H1 (cell line): ENCODE measurements at regions of chr2 and their contacts with region 1.

Region 1: DNA sequence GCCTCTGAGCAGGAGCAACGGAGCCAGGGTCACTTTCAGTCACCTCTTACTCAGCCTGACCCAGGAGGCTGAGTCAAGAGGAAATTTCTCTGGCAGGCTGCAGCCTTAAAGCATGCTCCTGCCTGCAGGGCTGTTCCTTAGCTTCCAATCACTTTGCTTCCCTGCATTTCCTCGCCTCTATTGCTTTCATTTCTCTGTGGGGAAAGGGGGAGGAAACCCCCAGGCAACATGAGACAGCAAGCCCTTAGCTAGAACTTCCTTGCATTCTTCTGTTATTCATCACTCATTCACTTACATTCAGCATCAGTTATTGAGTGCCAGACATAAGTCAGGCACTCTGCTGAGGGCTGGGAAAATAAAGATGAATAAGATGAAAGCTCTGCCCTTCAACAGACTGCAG is 13.0 kb downstream of the XDH start:
- DNase-seq: no peak
- H3K4me3 ChIP-seq: no peak overlapping the region
- H3K27ac ChIP-seq: no peak overlapping the region
- H3K4me1 ChIP-seq: peaks cover 0 to 8% (median 0%) of the 10 kb centered on the region in 4 experiments; a peak in 1 of 7 replicates
- H3K27me3 ChIP-seq: no peaks in the 10 kb centered on the region
- CTCF ChIP-seq: no peak
- EP300 ChIP-seq: no peak
- POLR2A ChIP-seq: no peak
- RAD21 ChIP-seq: no peak

Region 2: GRCh38 chr2:31386648-31387047 is 14.9 kb before region 1 on chr2:
- CTCF ChIA-PET with region 1: interaction called, 12 read pairs
- POLR2A ChIA-PET with region 1: interaction called, 3 read pairs
- DNase-seq: peak in 1 of 2 experiments; percentile 61
- H3K4me3 ChIP-seq: no peak overlapping the region
- H3K27ac ChIP-seq: no peak overlapping the region
- H3K4me1 ChIP-seq: peaks cover 0 to 12% (median 8%) of the 10 kb centered on the region in 4 experiments; a peak in 6 of 7 replicates
- H3K27me3 ChIP-seq: no peaks in the 10 kb centered on the region
- CTCF ChIP-seq: peak; percentile 27 to 36 (median 33); a peak in 3 of 4 replicates
- EP300 ChIP-seq: no peak
- POLR2A ChIP-seq: no peak
- RAD21 ChIP-seq: peak; percentile 29 to 43; a peak in 3 of 4 replicates

Region 3: GRCh38 chr2:31440764-31441163 is 39.2 kb after region 1 on chr2:
- CTCF ChIA-PET with region 1: no interaction called
- POLR2A ChIA-PET with region 1: no interaction called
- DNase-seq: no peak
- H3K4me3 ChIP-seq: no peak overlapping the region
- H3K27ac ChIP-seq: no peak overlapping the region
- H3K4me1 ChIP-seq: no peaks in the 10 kb centered on the region
- H3K27me3 ChIP-seq: no peaks in the 10 kb centered on the region
- CTCF ChIP-seq: no peak
- EP300 ChIP-seq: no peak
- POLR2A ChIP-seq: no peak
- RAD21 ChIP-seq: no peak

Region 4: DNA sequence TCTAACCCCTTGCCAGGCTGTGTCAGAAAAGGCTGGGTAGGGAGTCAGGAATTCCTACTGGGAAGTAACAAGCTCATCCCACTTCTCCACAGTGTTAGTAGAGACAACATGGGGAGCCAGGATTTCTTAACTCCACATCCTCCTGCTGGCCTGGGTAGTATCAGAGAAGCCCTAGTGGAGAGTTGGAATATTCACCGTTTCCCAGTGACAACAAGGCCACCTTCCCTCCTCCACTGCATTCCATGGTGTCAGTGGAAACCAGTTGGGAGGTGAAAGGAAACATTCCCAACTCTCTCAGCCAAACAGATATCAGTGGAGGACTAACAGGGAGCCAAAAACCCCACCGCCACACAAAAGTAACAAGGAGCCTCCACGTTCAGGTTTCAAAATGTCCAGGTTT is 137.9 kb after region 1 on chr2:
- CTCF ChIA-PET with region 1: no interaction called
- POLR2A ChIA-PET with region 1: no interaction called
- DNase-seq: no peak
- H3K4me3 ChIP-seq: no peak overlapping the region
- H3K27ac ChIP-seq: no peak overlapping the region
- H3K4me1 ChIP-seq: peaks cover 0 to 3% (median 0%) of the 10 kb centered on the region in 4 experiments; a peak in 1 of 7 replicates
- H3K27me3 ChIP-seq: no peaks in the 10 kb centered on the region
- CTCF ChIP-seq: peak in 2 of 3 experiments; percentile 19 to 28; a peak in 2 of 4 replicates
- EP300 ChIP-seq: no peak
- POLR2A ChIP-seq: no peak
- RAD21 ChIP-seq: peak in 1 of 2 experiments; percentile 6; a peak in 1 of 4 replicates

Region 5: DNA sequence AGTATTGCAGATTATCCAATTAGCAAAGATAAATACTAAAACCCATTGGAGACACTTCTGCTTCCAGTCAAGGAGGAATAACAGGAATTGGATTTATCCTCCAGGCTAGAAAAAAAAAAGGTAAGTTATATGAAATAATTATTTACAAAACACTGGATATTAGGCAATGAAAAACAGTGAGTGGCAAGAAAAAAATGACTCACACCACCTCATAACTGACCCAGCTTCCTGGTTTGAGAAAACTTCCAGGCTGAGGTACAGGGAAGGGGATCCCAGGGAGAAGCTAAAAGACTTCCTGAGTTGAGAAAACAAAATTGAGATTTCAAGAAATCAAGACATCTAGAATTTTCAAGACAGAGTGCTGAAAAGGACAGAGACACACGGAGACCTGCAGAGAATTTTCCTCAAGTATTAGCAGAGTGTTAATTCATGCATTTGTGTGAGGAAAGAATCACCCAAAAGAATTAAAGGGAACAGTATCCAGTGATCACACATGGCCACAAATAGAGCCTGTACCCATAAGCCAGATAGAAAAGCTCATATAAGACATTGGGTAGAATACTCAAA is 161.8 kb after region 1 on chr2:
- CTCF ChIA-PET with region 1: no interaction called
- POLR2A ChIA-PET with region 1: no interaction called
- DNase-seq: no peak
- H3K4me3 ChIP-seq: no peak overlapping the region
- H3K27ac ChIP-seq: no peak overlapping the region
- H3K4me1 ChIP-seq: no peaks in the 10 kb centered on the region
- H3K27me3 ChIP-seq: no peaks in the 10 kb centered on the region
- CTCF ChIP-seq: no peak
- EP300 ChIP-seq: no peak
- POLR2A ChIP-seq: no peak
- RAD21 ChIP-seq: no peak